PC-3 (cell line): ENCODE measurements at regions of chr3 and their contacts with region 1.

Region 1: GRCh38 chr3:62785387-62785982 is 89.7 kb downstream of the CADPS start:
- DNase-seq: no peak
- ATAC-seq: no peak
- H3K4me3 ChIP-seq: no peak overlapping the region
- H3K27ac ChIP-seq: no peak overlapping the region
- H3K4me1 ChIP-seq: no peaks in the 10 kb centered on the region
- H3K27me3 ChIP-seq: no peaks in the 10 kb centered on the region
- CTCF ChIP-seq: no peak

Region 2: DNA sequence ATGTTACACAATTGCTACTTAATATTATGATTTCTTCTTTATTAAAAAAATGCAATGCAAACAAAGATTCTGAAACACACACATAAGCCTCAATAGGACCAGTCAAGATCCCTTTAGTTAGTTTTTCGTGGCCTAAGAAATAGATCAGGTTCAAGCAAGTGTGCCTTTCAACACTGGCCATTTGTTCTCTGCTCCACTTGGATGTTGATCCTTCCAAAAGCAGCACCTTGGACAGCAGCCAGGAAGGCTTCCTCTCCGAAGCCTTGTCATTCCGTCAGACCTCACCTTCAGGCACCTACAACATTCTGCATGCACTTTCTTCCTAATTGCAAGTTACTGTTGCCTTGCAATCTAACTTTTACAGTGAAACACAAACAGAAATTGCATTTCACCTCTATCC is 256.3 kb before region 1 on chr3:
- CTCF ChIA-PET with region 1: no interaction called
- POLR2A ChIA-PET with region 1: no interaction called
- intact Hi-C with region 1: no loop called
- DNase-seq: peak; percentile 31
- ATAC-seq: no peak
- H3K4me3 ChIP-seq: no peak overlapping the region
- H3K27ac ChIP-seq: no peak overlapping the region
- H3K4me1 ChIP-seq: no peaks in the 10 kb centered on the region
- H3K27me3 ChIP-seq: no peaks in the 10 kb centered on the region
- CTCF ChIP-seq: no peak

Region 3: DNA sequence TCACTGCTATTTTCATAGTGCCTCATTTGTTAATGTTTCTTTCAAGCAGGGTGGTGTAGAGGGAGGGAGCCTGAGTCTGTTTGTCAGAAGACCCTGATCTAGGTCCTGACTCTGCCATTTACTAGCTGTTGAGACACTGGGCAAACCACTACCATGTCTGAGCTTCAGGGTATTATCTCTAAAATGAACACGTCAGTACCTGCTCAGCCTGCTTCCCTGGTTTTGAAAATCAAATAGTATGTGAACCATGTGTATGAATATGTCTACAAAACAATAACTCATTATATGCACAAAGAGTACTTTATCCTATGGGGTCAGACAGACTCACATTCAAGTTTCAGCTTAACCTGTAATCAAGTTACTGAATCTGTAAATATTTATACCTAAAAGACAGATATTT is 517.8 kb after region 1 on chr3:
- CTCF ChIA-PET with region 1: no interaction called
- POLR2A ChIA-PET with region 1: interaction called, 10 read pairs
- intact Hi-C with region 1: no loop called
- DNase-seq: peak; percentile 5
- ATAC-seq: no peak
- H3K4me3 ChIP-seq: no peak overlapping the region
- H3K27ac ChIP-seq: no peak overlapping the region
- H3K4me1 ChIP-seq: no peaks in the 10 kb centered on the region
- H3K27me3 ChIP-seq: no peaks in the 10 kb centered on the region
- CTCF ChIP-seq: no peak